ENCODE measurements at regions of chr11 and their contacts with region 1.

Region 1: DNA sequence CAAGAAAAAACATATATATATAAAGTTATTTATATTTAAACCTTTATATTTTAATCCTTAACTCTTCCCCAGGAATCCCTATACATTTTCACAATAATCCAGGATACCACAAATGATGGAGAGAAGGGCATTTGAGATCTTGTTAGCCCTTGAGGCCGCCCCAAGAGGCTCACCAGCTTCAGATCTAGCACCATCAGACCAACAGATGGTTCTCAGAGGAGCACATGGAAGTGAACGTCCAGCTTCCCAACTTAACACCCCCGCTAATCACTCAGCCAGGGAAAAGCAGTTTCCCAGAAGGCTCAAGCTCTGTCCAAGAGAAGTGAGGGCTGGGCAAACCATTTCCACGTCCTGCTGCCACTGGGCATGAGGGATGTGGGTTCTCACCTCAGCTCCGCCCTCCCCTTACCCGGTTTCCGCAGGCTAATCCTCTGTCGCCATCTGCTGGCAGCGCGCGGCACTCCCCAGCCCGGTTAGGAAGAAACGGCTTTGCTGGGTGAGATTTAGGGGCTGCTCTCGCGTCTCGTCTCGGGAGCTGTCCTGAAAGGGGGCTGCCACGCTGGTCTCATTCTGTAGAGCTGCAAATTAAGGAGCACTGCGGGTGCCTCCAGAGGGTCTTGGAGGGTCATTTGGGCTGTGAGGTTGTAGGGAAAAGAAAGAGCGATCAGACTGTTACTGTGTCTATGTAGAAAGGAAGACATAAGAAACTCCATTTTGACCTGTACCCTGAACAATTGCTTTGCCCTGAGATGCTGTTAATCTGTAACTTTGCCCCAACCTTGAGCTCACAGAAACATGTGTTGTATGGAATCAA is 6.8 kb upstream of the FAM111A start:
- DNase-seq: peak; percentile 85
- H3K4me3 ChIP-seq: peak overlapping the region in 2 of 4 donors; percentile 8 to 16
- H3K27ac ChIP-seq: no peak overlapping the region
- H3K4me1 ChIP-seq: peaks cover 0 to 7% (median 0%) of the 10 kb centered on the region in 4 donors
- H3K27me3 ChIP-seq: no peaks in the 10 kb centered on the region
- CTCF ChIP-seq: peak; percentile 80 to 98 (median 92)
- EP300 ChIP-seq: no peak
- POLR2A ChIP-seq: no peak

Region 2: GRCh38 chr11:59053387-59053786 is 82.5 kb before region 1 on chr11:
- intact Hi-C with region 1: loop called (anchors 5 kb)
- DNase-seq: peak; percentile 75
- H3K4me3 ChIP-seq: no peak overlapping the region
- H3K27ac ChIP-seq: no peak overlapping the region
- H3K4me1 ChIP-seq: peaks cover 0 to 4% (median 0%) of the 10 kb centered on the region in 4 donors
- H3K27me3 ChIP-seq: peaks cover 4 to 15% (median 4%) of the 10 kb centered on the region in 3 donors
- CTCF ChIP-seq: peak in 3 of 4 experiments; percentile 18 to 52 (median 29)
- EP300 ChIP-seq: no peak
- POLR2A ChIP-seq: no peak

Region 3: DNA sequence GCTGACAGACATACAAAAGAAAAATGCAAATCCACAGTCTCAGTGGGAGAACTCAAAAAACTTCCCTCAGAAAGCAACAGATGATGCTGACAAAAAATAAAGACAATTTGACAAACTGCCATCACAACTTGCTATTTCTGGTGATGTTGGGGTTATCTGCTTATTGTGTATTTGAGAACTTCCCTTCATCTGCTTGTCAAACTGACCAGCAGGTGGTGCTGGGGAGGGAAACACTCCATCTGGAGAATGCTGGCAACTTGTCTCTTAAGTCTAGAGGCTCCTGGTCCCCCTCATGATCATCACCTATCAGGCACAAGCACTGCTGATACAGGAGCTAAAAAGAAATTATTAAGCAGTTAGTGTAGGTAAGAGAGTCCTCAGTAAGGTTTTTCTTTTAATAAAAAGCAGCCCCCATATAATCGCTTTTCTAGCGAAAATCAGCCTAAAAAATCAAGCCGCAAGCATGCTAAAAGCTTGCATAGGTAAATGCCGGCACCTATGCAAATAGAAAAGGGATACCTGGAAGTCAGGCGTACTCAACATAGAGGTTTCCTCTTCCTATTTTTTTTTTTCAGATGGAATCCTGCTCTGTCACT is 38.6 kb before region 1 on chr11:
- intact Hi-C with region 1: loop called (anchors 2 kb)
- DNase-seq: peak; percentile 72
- H3K4me3 ChIP-seq: no peak overlapping the region
- H3K27ac ChIP-seq: no peak overlapping the region
- H3K4me1 ChIP-seq: peaks cover 0 to 8% (median 3%) of the 10 kb centered on the region in 4 donors
- H3K27me3 ChIP-seq: peaks cover 0 to 37% (median 8%) of the 10 kb centered on the region in 3 donors
- CTCF ChIP-seq: peak in 3 of 4 experiments; percentile 38 to 51 (median 45)
- EP300 ChIP-seq: no peak
- POLR2A ChIP-seq: no peak